ENCODE measurements at regions of chr5 and their contacts with region 1.

Region 1: GRCh38 chr5:111697881-111698757 is 58.9 kb downstream of the NREP start:
- ATAC-seq: peak in 3 of 8 experiments; percentile 22 to 64 (median 24)
- H3K4me3 ChIP-seq: no peak overlapping the region
- H3K27ac ChIP-seq: no peak overlapping the region
- H3K4me1 ChIP-seq: peaks cover 0 to 13% of the 10 kb centered on the region in 2 donors

Region 2: GRCh38 chr5:111537141-111538024 is 160.7 kb before region 1 on chr5:
- in situ Hi-C with region 1: no loop called
- ATAC-seq: peak in 1 of 8 experiments; percentile 20
- H3K4me3 ChIP-seq: no peak overlapping the region
- H3K27ac ChIP-seq: no peak overlapping the region
- H3K4me1 ChIP-seq: no peaks in the 10 kb centered on the region

Region 3: GRCh38 chr5:111550279-111551020 is 147.7 kb before region 1 on chr5:
- in situ Hi-C with region 1: loop called in 1 of 9 experiments (anchors 10 kb)
- ATAC-seq: peak; percentile 69 to 90 (median 86)
- H3K4me3 ChIP-seq: no peak overlapping the region
- H3K27ac ChIP-seq: no peak overlapping the region
- H3K4me1 ChIP-seq: peaks cover 23 to 25% of the 10 kb centered on the region in 2 donors

Measured in motor neuron (in vitro differentiated cells).